A673 (cell line): ENCODE measurements at regions of chr2 and their contacts with region 1.

Region 1: DNA sequence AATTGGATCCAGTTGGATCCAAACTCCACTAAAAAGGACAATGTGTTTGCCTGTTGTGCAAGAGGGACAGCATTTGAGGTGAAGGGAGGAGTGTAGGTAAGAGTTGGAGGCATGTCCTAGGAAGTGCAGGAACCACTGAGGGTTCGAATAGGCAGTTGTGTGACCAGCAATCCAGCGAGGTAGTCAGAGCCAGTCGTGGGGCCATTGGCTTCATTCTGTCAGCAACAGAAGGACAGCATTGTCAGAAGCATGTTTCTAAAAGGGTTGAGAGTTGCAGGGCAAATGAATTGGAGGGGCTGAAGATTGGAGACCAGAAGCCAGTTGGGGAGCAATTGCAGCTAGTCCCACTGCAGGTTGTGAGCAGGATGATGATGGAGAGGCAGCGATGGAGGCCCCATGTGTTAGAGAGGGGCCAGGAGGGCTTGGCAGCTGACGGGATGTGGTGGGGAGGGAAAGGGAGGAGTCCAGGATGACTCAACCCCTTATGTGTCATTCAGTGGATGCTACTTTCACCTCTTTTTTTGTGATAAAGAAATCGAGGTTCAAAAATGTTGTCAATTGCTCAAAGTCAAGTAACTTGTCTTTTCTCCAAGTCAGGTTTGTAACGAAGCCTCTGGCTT is 96.7 kb upstream of the SIX3 start:
- DNase-seq: no peak
- H3K4me3 ChIP-seq: no peak overlapping the region
- H3K27ac ChIP-seq: no peak overlapping the region
- H3K4me1 ChIP-seq: no peaks in the 10 kb centered on the region
- H3K27me3 ChIP-seq: peaks cover 27% of the 10 kb centered on the region
- CTCF ChIP-seq: no peak

Region 2: DNA sequence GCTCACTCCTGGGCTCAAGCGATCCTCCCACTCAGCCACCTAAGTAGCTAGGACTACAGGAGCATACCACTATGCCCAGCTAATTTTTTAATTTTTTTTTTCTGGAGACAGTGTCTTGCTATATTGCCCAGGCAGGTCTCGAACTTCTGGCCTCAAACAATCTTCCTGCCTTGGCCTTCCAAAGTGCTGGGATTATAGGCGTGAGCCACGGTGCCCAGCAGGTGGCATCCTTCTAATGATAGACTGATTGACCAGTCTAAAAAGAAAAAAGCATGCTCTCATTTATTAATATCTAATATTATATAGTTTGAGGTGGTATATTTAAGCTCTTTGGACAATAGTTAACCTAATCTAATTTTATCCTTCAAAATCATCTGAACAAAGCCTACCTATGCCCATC is 284.4 kb before region 1 on chr2:
- CTCF ChIA-PET with region 1: no interaction called
- POLR2A ChIA-PET with region 1: interaction called, 12 read pairs
- intact Hi-C with region 1: no loop called
- DNase-seq: no peak
- H3K4me3 ChIP-seq: no peak overlapping the region
- H3K27ac ChIP-seq: no peak overlapping the region
- H3K4me1 ChIP-seq: no peaks in the 10 kb centered on the region
- H3K27me3 ChIP-seq: no peaks in the 10 kb centered on the region
- CTCF ChIP-seq: peak; percentile 38; the same call in 1 of the 2 replicates